CD4-positive, alpha-beta T cell (primary cell): ENCODE measurements at regions of chr1 and their contacts with region 1.

Region 1: GRCh38 chr1:155001675-155002463 is 733 bp upstream of the ZBTB7B start:
- DNase-seq: peak; percentile 94 to 99 (median 98)
- ATAC-seq: peak; percentile 73
- H3K4me3 ChIP-seq: peak overlapping the region; percentile 73
- H3K4me3 Mint-ChIP-seq: peak overlapping the region; percentile 99
- H3K27ac ChIP-seq: peak overlapping the region; percentile 92 to 96
- H3K27ac Mint-ChIP-seq: peak overlapping the region; percentile 90
- H3K4me1 ChIP-seq: peaks cover 80% of the 10 kb centered on the region
- H3K4me1 Mint-ChIP-seq: peaks cover 65% of the 10 kb centered on the region
- H3K27me3 ChIP-seq: no peaks in the 10 kb centered on the region
- H3K27me3 Mint-ChIP-seq: no peaks in the 10 kb centered on the region
- CTCF ChIP-seq: no peak

Region 2: GRCh38 chr1:154847891-154848290 is 154.0 kb before region 1 on chr1:
- CTCF ChIA-PET with region 1: no interaction called
- POLR2A ChIA-PET with region 1: no interaction called
- intact Hi-C with region 1: no loop called
- DNase-seq: no peak
- ATAC-seq: no peak
- H3K4me3 ChIP-seq: no peak overlapping the region
- H3K4me3 Mint-ChIP-seq: no peak overlapping the region
- H3K27ac ChIP-seq: no peak overlapping the region
- H3K27ac Mint-ChIP-seq: no peak overlapping the region
- H3K4me1 ChIP-seq: no peaks in the 10 kb centered on the region
- H3K4me1 Mint-ChIP-seq: no peaks in the 10 kb centered on the region
- H3K27me3 ChIP-seq: no peaks in the 10 kb centered on the region
- H3K27me3 Mint-ChIP-seq: no peaks in the 10 kb centered on the region
- CTCF ChIP-seq: no peak

Region 3: GRCh38 chr1:154896771-154897391 is 105.0 kb before region 1 on chr1:
- CTCF ChIA-PET with region 1: no interaction called
- POLR2A ChIA-PET with region 1: no interaction called
- intact Hi-C with region 1: no loop called
- DNase-seq: no peak
- ATAC-seq: no peak
- H3K4me3 ChIP-seq: no peak overlapping the region
- H3K4me3 Mint-ChIP-seq: no peak overlapping the region
- H3K27ac ChIP-seq: no peak overlapping the region
- H3K27ac Mint-ChIP-seq: no peak overlapping the region
- H3K4me1 ChIP-seq: no peaks in the 10 kb centered on the region
- H3K4me1 Mint-ChIP-seq: no peaks in the 10 kb centered on the region
- H3K27me3 ChIP-seq: peaks cover 0 to 2% of the 10 kb centered on the region in 2 experiments
- H3K27me3 Mint-ChIP-seq: no peaks in the 10 kb centered on the region
- CTCF ChIP-seq: no peak

Region 4: GRCh38 chr1:154936555-154937084 is 65.2 kb before region 1 on chr1 and contains the start of gene PMVK:
- CTCF ChIA-PET with region 1: interaction called, 14 read pairs
- POLR2A ChIA-PET with region 1: interaction called, 15 read pairs
- intact Hi-C with region 1: loop called in 1 of 2 experiments (anchors 1 kb)
- DNase-seq: peak; percentile 90 to 98 (median 94)
- ATAC-seq: peak; percentile 79
- H3K4me3 ChIP-seq: peak within 1 kb of the TSS; percentile 86
- H3K4me3 Mint-ChIP-seq: peak within 1 kb of the TSS; percentile 90
- H3K27ac ChIP-seq: peak within 1 kb of the TSS; percentile 98 to 100
- H3K27ac Mint-ChIP-seq: peak within 1 kb of the TSS; percentile 98
- H3K4me1 ChIP-seq: peaks cover 58% of the 10 kb centered on the region
- H3K4me1 Mint-ChIP-seq: peaks cover 59% of the 10 kb centered on the region
- H3K27me3 ChIP-seq: no peaks in the 10 kb centered on the region
- H3K27me3 Mint-ChIP-seq: no peaks in the 10 kb centered on the region
- CTCF ChIP-seq: peak; percentile 51
- total RNA-seq, gene PMVK: 6.6 to 7.4 TPM

Region 5: GRCh38 chr1:154961497-154962262 is 40.2 kb before region 1 on chr1 and contains the start of gene PYGO2:
- CTCF ChIA-PET with region 1: interaction called, 24 read pairs
- POLR2A ChIA-PET with region 1: interaction called, 28 read pairs
- intact Hi-C with region 1: loop called in 1 of 2 experiments (anchors 1 kb)
- DNase-seq: peak; percentile 65 to 91 (median 77)
- ATAC-seq: peak; percentile 72
- H3K4me3 ChIP-seq: peak within 1 kb of the TSS; percentile 68
- H3K4me3 Mint-ChIP-seq: peak within 1 kb of the TSS; percentile 99
- H3K27ac ChIP-seq: peak within 1 kb of the TSS; percentile 88 to 95
- H3K27ac Mint-ChIP-seq: peak within 1 kb of the TSS; percentile 98
- H3K4me1 ChIP-seq: peaks cover 58% of the 10 kb centered on the region
- H3K4me1 Mint-ChIP-seq: peaks cover 20% of the 10 kb centered on the region
- H3K27me3 ChIP-seq: no peaks in the 10 kb centered on the region
- H3K27me3 Mint-ChIP-seq: no peaks in the 10 kb centered on the region
- CTCF ChIP-seq: peak; percentile 60
- total RNA-seq, gene PYGO2: 30.3 to 32.8 TPM

Region 6: GRCh38 chr1:154982897-154983648 is 18.8 kb before region 1 on chr1 and contains the start of gene FLAD1:
- CTCF ChIA-PET with region 1: interaction called, 29 read pairs
- POLR2A ChIA-PET with region 1: interaction called, 40 read pairs
- intact Hi-C with region 1: loop called (anchors 1 kb)
- DNase-seq: peak; percentile 85 to 99 (median 92)
- ATAC-seq: peak; percentile 99
- H3K4me3 ChIP-seq: peak within 1 kb of the TSS; percentile 64
- H3K4me3 Mint-ChIP-seq: no peak within 1 kb of the TSS
- H3K27ac ChIP-seq: peak within 1 kb of the TSS; percentile 13 to 54
- H3K27ac Mint-ChIP-seq: no peak within 1 kb of the TSS
- H3K4me1 ChIP-seq: peaks cover 28% of the 10 kb centered on the region
- H3K4me1 Mint-ChIP-seq: peaks cover 10% of the 10 kb centered on the region
- H3K27me3 ChIP-seq: no peaks in the 10 kb centered on the region
- H3K27me3 Mint-ChIP-seq: no peaks in the 10 kb centered on the region
- CTCF ChIP-seq: no peak
- total RNA-seq, gene FLAD1: 16.7 to 19.4 TPM

Region 7: DNA sequence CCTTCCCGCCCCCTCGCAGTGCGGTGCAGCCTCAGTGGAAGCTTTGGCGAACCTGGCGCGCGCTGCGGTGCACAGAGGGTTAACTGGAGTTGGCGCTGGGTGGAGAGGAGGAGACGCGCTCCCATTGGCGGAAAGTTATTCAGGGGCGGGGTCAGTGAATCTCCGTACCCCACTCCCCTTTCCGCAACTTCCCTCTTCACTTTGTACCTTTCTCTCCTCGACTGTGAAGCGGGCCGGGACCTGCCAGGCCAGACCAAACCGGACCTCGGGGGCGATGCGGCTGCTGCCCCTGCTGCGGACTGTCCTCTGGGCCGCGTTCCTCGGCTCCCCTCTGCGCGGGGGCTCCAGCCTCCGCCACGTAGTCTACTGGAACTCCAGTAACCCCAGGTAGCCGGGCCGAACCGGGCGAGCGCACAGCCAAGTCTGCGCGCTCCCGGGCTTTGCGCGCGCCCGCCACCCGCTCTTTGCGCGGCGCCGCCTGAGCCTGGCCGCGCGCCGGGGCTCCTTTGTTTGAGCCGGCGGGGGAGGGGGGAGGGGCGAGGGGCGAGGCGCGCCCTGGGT is 61.8 kb after region 1 on chr1 and contains the start of gene EFNA4:
- CTCF ChIA-PET with region 1: interaction called, 3 read pairs
- POLR2A ChIA-PET with region 1: interaction called, 3 read pairs
- intact Hi-C with region 1: loop called (anchors 2 to 5 kb)
- DNase-seq: peak; percentile 69 to 92 (median 80)
- ATAC-seq: peak; percentile 90
- H3K4me3 ChIP-seq: peak within 1 kb of the TSS; percentile 76
- H3K4me3 Mint-ChIP-seq: peak within 1 kb of the TSS; percentile 96
- H3K27ac ChIP-seq: peak within 1 kb of the TSS in 1 of 2 donors; percentile 61
- H3K27ac Mint-ChIP-seq: peak within 1 kb of the TSS; percentile 70
- H3K4me1 ChIP-seq: peaks cover 41% of the 10 kb centered on the region
- H3K4me1 Mint-ChIP-seq: peaks cover 32% of the 10 kb centered on the region
- H3K27me3 ChIP-seq: no peaks in the 10 kb centered on the region
- H3K27me3 Mint-ChIP-seq: no peaks in the 10 kb centered on the region
- CTCF ChIP-seq: no peak
- total RNA-seq, gene EFNA4: 2.4 to 3.3 TPM